ENCODE measurements at regions of chr6 and their contacts with region 1.

Region 1: DNA sequence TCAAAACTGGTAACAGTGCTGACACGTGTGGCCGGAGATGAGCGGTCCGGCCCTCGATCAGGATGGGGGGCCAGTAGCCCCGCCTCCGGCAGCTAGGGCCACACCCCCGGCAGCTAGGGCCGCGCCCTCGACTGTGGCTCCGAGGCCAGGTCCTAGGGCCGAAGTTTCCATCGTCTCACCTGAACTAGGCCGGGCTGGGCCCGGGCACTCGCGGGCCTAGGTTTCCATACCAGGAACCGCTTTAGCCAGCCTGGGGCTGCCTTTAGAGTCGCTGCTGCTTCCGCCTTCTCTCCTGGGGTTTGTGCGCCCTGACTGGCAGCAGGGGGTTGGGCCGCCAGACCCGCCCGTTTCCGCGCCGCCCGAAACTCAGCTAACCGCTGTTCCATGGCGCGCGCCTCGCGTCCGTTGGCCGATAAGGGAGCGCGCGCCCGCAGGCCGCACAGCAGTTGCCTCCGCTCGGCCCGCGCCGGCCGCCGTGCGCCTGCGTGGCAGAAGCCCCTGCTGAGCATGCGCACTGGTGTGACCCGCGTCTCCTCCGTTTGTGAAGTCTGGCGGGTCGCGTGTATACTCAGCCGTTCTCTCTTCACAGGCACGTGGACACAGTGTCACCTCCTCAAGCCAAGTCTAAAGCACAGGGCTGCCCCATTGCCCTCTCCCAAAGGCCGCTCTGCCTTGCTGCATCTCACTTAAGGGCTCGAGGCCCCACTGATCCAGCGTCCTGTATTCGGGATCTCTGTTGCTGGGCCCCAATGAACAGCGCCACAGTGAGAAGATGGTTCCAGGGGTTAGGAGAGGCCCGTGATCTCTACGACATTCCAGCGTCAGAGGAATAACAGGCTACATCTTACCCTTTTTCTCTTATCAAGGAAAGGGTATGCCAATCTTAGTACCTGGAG is at the start of gene SAYSD1:
- DNase-seq: peak; percentile 85 to 94 (median 92)
- ATAC-seq: peak; percentile 93
- H3K4me3 ChIP-seq: peak within 1 kb of the TSS; percentile 74
- H3K4me3 Mint-ChIP-seq: peak within 1 kb of the TSS; percentile 82 to 100 (median 96)
- H3K27ac ChIP-seq: peak within 1 kb of the TSS; percentile 86
- H3K27ac Mint-ChIP-seq: peak within 1 kb of the TSS; percentile 92 to 99 (median 97)
- H3K4me1 ChIP-seq: peaks cover 21 to 43% of the 10 kb centered on the region in 2 donors
- H3K4me1 Mint-ChIP-seq: peaks cover 25 to 67% (median 62%) of the 10 kb centered on the region in 7 donors
- H3K27me3 ChIP-seq: no peaks in the 10 kb centered on the region
- H3K27me3 Mint-ChIP-seq: no peaks in the 10 kb centered on the region
- total RNA-seq, gene SAYSD1: 15.1 to 26.8 (median 19.8) TPM

Region 2: GRCh38 chr6:38370653-38371601 is 744.0 kb before region 1 on chr6:
- CTCF ChIA-PET with region 1: no interaction called
- POLR2A ChIA-PET with region 1: no interaction called
- intact Hi-C with region 1: no loop called
- DNase-seq: no peak
- ATAC-seq: no peak
- H3K4me3 ChIP-seq: no peak overlapping the region
- H3K4me3 Mint-ChIP-seq: no peak overlapping the region
- H3K27ac ChIP-seq: no peak overlapping the region
- H3K27ac Mint-ChIP-seq: no peak overlapping the region
- H3K4me1 ChIP-seq: no peaks in the 10 kb centered on the region
- H3K4me1 Mint-ChIP-seq: peaks cover 0 to 14% (median 9%) of the 10 kb centered on the region in 7 donors
- H3K27me3 ChIP-seq: no peaks in the 10 kb centered on the region
- H3K27me3 Mint-ChIP-seq: no peaks in the 10 kb centered on the region

Region 3: GRCh38 chr6:38639498-38640215 is 475.3 kb before region 1 on chr6 and contains the start of gene BTBD9:
- CTCF ChIA-PET with region 1: no interaction called
- POLR2A ChIA-PET with region 1: interaction called, 4 read pairs
- intact Hi-C with region 1: loop called (anchors 1 to 2 kb)
- DNase-seq: peak; percentile 83 to 92 (median 90)
- ATAC-seq: peak; percentile 87
- H3K4me3 ChIP-seq: peak within 1 kb of the TSS; percentile 90
- H3K4me3 Mint-ChIP-seq: peak within 1 kb of the TSS; percentile 74 to 94 (median 90)
- H3K27ac ChIP-seq: peak within 1 kb of the TSS; percentile 94
- H3K27ac Mint-ChIP-seq: peak within 1 kb of the TSS; percentile 88 to 96 (median 91)
- H3K4me1 ChIP-seq: peaks cover 16 to 22% of the 10 kb centered on the region in 2 donors
- H3K4me1 Mint-ChIP-seq: peaks cover 40 to 65% (median 57%) of the 10 kb centered on the region in 7 donors
- H3K27me3 ChIP-seq: no peaks in the 10 kb centered on the region
- H3K27me3 Mint-ChIP-seq: no peaks in the 10 kb centered on the region
- total RNA-seq, gene BTBD9: 20.6 to 58.8 (median 43.6) TPM

Region 4: GRCh38 chr6:38871741-38872568 is 243.0 kb before region 1 on chr6:
- CTCF ChIA-PET with region 1: no interaction called
- POLR2A ChIA-PET with region 1: interaction called, 4 read pairs
- intact Hi-C with region 1: loop called in 1 of 2 experiments (anchors 1 kb)
- DNase-seq: peak; percentile 11 to 66 (median 38)
- ATAC-seq: peak; percentile 52
- H3K4me3 ChIP-seq: no peak overlapping the region
- H3K4me3 Mint-ChIP-seq: no peak overlapping the region
- H3K27ac ChIP-seq: no peak overlapping the region
- H3K27ac Mint-ChIP-seq: peak overlapping the region in 1 of 9 donors; percentile 4
- H3K4me1 ChIP-seq: peaks cover 9 to 23% of the 10 kb centered on the region in 2 donors
- H3K4me1 Mint-ChIP-seq: peaks cover 10 to 47% (median 24%) of the 10 kb centered on the region in 7 donors
- H3K27me3 ChIP-seq: no peaks in the 10 kb centered on the region
- H3K27me3 Mint-ChIP-seq: peaks cover 0 to 10% (median 7%) of the 10 kb centered on the region in 5 donors

Region 5: GRCh38 chr6:39037707-39038106 is 77.2 kb before region 1 on chr6:
- CTCF ChIA-PET with region 1: no interaction called
- POLR2A ChIA-PET with region 1: no interaction called
- intact Hi-C with region 1: no loop called
- DNase-seq: no peak
- ATAC-seq: no peak
- H3K4me3 ChIP-seq: no peak overlapping the region
- H3K4me3 Mint-ChIP-seq: no peak overlapping the region
- H3K27ac ChIP-seq: no peak overlapping the region
- H3K27ac Mint-ChIP-seq: no peak overlapping the region
- H3K4me1 ChIP-seq: no peaks in the 10 kb centered on the region
- H3K4me1 Mint-ChIP-seq: peaks cover 0 to 8% (median 0%) of the 10 kb centered on the region in 7 donors
- H3K27me3 ChIP-seq: no peaks in the 10 kb centered on the region
- H3K27me3 Mint-ChIP-seq: peaks cover 37 to 63% (median 53%) of the 10 kb centered on the region in 5 donors

Region 6: DNA sequence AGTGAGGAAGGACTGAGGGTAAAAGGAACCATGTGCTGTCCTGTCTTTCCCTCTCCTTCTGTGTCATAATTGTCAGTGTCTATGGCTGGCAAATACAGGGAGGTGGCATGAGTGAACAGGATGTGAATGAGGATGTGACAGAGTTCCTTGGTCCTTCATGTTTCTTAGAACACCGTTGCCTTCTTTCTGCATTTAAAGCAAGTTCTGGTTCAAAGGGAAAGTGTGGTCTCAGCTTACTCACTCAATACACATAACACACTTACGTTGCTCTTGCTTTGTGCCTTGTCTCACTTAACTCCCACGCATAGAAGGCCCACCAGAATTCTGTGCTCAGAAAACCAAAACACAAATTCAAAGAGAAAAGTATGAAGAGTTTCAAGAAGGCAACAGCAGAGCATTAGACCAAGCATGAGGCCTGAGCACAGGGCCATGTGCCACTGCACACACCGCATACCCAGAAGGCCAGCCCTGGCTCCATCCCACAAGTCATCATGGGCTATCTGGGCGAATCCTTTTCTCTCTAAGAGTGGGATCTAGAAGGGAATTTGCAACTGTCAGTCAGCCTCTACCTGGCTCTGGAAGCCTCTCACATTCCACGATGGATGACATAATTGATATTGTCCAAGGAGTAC is 38.9 kb after region 1 on chr6:
- CTCF ChIA-PET with region 1: no interaction called
- POLR2A ChIA-PET with region 1: no interaction called
- intact Hi-C with region 1: loop called in 1 of 2 experiments (anchors 5 kb)
- DNase-seq: peak in 4 of 9 donors; percentile 11 to 29 (median 12)
- ATAC-seq: peak; percentile 26
- H3K4me3 ChIP-seq: no peak overlapping the region
- H3K4me3 Mint-ChIP-seq: peak overlapping the region in 1 of 10 donors; percentile 1
- H3K27ac ChIP-seq: no peak overlapping the region
- H3K27ac Mint-ChIP-seq: peak overlapping the region in 6 of 9 donors; percentile 15 to 75 (median 46)
- H3K4me1 ChIP-seq: peaks cover 0 to 4% of the 10 kb centered on the region in 2 donors
- H3K4me1 Mint-ChIP-seq: peaks cover 3 to 27% (median 14%) of the 10 kb centered on the region in 7 donors
- H3K27me3 ChIP-seq: no peaks in the 10 kb centered on the region
- H3K27me3 Mint-ChIP-seq: peaks cover 0 to 22% (median 12%) of the 10 kb centered on the region in 5 donors

Region 7: DNA sequence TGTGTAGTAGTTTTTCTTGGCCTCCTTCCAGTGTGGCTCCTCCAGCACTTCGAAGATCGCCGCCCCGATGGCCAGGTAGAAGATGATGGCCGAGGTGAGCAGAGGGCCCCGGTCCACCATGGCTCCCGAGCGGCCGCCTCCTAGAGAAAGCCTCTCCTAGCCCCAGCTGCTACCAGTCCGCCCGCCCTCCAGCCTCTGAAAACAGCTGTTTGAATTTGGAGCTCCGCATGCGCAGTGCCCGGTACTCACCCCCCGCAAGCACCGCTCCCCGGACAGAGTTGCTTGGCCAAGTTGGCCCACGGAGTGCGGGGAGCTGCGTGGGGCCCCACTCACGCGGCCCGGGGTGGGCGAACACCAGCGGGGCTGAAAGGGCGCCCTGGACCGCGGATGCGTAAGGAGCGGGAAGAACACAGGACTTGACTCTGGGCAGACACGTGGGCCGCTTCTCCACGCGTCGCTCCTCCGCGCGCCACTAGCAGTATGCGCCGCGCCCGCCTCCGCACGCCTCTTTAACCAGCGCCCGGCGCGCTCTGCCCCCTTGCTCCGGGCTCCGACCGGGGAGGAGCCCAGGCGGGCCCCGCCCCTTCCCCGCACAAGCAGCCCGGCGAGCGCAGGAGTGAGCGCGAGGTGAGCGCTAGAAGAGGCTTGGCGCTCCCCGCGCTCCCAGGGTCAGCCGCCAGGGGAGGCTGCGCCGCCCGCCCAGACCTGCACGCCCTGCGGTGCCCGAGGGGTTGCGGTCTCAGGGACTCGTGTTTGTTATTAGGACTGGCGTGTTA is 114.2 kb after region 1 on chr6 and contains the start of gene KCNK5:
- CTCF ChIA-PET with region 1: no interaction called
- POLR2A ChIA-PET with region 1: no interaction called
- intact Hi-C with region 1: loop called (anchors 1 to 5 kb)
- DNase-seq: peak; percentile 5 to 91 (median 42)
- ATAC-seq: peak; percentile 88
- H3K4me3 ChIP-seq: peak within 1 kb of the TSS; percentile 54
- H3K4me3 Mint-ChIP-seq: peak within 1 kb of the TSS; percentile 61 to 86 (median 72)
- H3K27ac ChIP-seq: no peak within 1 kb of the TSS
- H3K27ac Mint-ChIP-seq: peak within 1 kb of the TSS in 2 of 9 donors; percentile 51 to 91
- H3K4me1 ChIP-seq: peaks cover 18 to 43% of the 10 kb centered on the region in 2 donors
- H3K4me1 Mint-ChIP-seq: peaks cover 15 to 48% (median 33%) of the 10 kb centered on the region in 7 donors
- H3K27me3 ChIP-seq: no peaks in the 10 kb centered on the region
- H3K27me3 Mint-ChIP-seq: peaks cover 0 to 12% (median 6%) of the 10 kb centered on the region in 5 donors
- total RNA-seq, gene KCNK5: 0.24 to 9.6 (median 0.34) TPM in 3 of 5 experiments, not detected in the others

Region 8: DNA sequence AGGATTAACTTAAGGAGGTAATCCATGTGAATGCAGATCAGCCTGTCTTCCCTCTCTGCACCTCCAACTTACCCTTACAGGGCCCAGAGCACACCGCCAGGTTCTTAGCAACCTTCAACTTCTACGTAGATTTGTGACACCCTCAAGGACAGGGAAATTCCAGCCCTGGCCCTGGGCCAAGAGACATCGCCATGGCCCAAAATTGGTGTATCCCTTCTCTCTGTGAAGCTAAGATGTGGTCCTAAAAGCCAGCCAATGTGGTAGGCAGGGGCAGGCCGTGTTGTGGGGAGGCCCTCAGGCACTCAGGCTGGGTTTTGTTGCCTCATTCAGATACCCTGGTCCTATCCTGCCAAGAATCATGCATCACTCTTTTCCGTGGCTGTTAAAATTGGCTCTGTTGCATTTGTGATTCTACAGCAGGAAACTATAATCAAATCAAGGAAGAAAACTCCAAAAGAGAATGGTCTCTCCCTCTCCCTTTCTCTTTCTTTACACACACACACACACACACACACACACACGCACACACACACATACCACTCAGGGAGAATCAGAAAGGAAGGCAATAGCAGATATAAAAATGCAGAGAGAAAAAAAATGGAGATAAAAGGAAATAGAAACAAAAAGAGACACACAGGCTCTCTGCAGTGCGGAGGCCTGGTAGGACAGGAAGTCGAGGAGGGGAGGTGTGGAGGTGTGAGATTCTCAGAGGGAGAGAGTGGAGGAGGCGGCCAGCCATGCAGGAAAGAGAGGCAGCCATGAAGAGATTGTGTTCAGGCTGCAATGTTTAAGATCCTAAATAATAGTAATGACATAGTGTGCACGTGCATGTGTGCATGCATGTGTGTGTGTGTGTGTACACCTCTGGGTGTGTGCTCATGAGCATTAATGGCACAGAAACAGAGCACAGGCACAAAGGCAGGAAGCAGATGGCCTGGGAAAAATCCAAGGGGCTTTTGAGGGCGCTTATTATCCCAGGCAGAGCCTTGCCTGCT is 1674.0 kb after region 1 on chr6:
- CTCF ChIA-PET with region 1: no interaction called
- POLR2A ChIA-PET with region 1: no interaction called
- intact Hi-C with region 1: loop called in 1 of 2 experiments (anchors 10 kb)
- DNase-seq: peak in 8 of 9 donors; percentile 23 to 47 (median 28)
- ATAC-seq: peak; percentile 71
- H3K4me3 ChIP-seq: no peak overlapping the region
- H3K4me3 Mint-ChIP-seq: peak overlapping the region; percentile 34 to 76 (median 59)
- H3K27ac ChIP-seq: peak overlapping the region; percentile 44
- H3K27ac Mint-ChIP-seq: peak overlapping the region; percentile 57 to 90 (median 83)
- H3K4me1 ChIP-seq: peaks cover 16 to 25% of the 10 kb centered on the region in 2 donors
- H3K4me1 Mint-ChIP-seq: peaks cover 24 to 46% (median 36%) of the 10 kb centered on the region in 7 donors
- H3K27me3 ChIP-seq: no peaks in the 10 kb centered on the region
- H3K27me3 Mint-ChIP-seq: peaks cover 0 to 6% (median 0%) of the 10 kb centered on the region in 5 donors